Panc1 (cell line): ENCODE measurements at regions of chr17 and their contacts with region 1.

Region 1: DNA sequence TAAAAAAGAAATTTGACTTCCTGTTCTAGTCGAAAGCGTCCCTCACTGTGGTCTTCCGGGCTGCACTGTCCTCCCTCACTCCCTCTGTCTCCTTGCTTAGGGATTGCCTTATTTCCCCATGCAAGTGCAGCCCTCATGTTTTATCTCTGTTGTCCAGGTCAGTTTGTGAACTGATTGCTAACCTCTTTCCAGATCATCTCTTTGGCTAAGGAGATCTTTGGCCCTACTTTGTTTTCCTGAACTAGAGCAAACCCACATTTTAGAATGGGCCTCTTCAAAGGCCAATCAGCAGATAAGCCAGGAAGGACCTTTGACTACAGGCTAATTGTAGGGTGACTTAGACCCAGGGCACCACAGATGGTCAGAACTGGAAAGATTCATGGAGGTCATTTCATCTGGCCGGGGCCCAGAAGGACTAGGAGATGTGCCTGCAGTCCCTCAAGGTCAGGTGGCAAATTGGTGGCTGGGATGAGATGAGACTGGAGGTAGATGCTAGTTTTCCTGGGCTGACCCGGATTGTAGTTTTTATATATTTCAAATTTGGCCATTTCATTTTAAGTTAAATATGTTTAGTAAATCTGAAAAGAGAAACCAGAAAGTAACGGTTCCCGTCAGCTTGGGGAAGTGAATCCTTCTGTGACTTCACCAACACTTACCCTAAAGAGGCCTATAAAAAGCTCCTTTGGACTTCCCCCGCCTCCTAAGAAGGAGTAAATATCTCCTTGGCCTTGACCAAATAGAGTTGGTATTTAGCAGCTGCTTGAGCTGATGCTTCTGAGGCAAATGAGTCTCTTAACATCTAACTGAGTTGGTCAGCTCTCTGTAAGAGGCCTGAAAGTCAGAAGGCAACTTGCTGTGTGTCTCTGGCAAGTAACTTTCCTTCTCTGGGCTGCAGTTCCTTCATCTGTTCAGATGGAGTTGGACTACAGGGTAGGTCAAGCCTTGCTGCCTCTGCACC is 6.2 kb upstream of the SLC25A19 start:
- DNase-seq: no peak
- ATAC-seq: no peak
- H3K4me3 ChIP-seq: no peak overlapping the region
- H3K27ac ChIP-seq: no peak overlapping the region
- H3K4me1 ChIP-seq: no peaks in the 10 kb centered on the region
- H3K27me3 ChIP-seq: no peaks in the 10 kb centered on the region
- CTCF ChIP-seq: no peak

Region 2: GRCh38 chr17:75476271-75476671 is 180.8 kb after region 1 on chr17:
- CTCF ChIA-PET with region 1: no interaction called
- POLR2A ChIA-PET with region 1: no interaction called
- in situ Hi-C with region 1: no loop called
- intact Hi-C with region 1: no loop called
- DNase-seq: no peak
- ATAC-seq: no peak
- H3K4me3 ChIP-seq: no peak overlapping the region
- H3K27ac ChIP-seq: no peak overlapping the region
- H3K4me1 ChIP-seq: no peaks in the 10 kb centered on the region
- H3K27me3 ChIP-seq: no peaks in the 10 kb centered on the region
- CTCF ChIP-seq: no peak

Region 3: DNA sequence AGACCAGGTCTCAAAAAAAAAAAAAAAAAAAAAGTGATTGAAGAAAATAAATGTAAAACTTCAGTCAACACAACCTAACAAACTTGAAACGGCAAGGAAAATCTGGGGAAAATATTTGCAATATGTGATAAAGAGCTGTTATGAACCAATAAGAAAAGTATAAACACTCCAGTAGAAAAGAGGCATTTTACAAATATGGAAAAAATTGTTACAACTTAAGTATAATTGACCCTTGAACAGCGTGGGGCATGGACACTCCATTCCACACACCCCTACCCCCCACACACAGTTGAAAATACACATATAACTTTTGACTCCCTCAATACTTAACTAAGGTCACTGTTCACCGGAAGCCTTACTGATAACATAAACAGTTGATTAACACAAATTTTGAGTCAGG is 1463.1 kb after region 1 on chr17:
- CTCF ChIA-PET with region 1: no interaction called
- POLR2A ChIA-PET with region 1: interaction called, 10 read pairs
- in situ Hi-C with region 1: no loop called
- intact Hi-C with region 1: no loop called
- DNase-seq: no peak
- ATAC-seq: no peak
- H3K4me3 ChIP-seq: no peak overlapping the region
- H3K27ac ChIP-seq: no peak overlapping the region
- H3K4me1 ChIP-seq: no peaks in the 10 kb centered on the region
- H3K27me3 ChIP-seq: no peaks in the 10 kb centered on the region
- CTCF ChIP-seq: no peak